Heart left ventricle (tissue), 16 donors: ENCODE measurements at regions of chr6 and their contacts with region 1.

Region 1: GRCh38 chr6:145372671-145373151 is 362.6 kb downstream of the EPM2A start:
- DNase-seq: peak in 4 of 5 donors; percentile 62 to 74 (median 72)
- ATAC-seq: peak; percentile 98 to 99 (median 98)
- H3K4me3 ChIP-seq: peak overlapping the region in 9 of 12 donors; percentile 10 to 38 (median 30)
- H3K27ac ChIP-seq: peak overlapping the region; percentile 49 to 77 (median 68)
- H3K4me1 ChIP-seq: peaks cover 0 to 21% (median 6%) of the 10 kb centered on the region in 12 donors
- H3K27me3 ChIP-seq: no peaks in the 10 kb centered on the region
- CTCF ChIP-seq: no peak
- POLR2A ChIP-seq: no peak

Region 2: DNA sequence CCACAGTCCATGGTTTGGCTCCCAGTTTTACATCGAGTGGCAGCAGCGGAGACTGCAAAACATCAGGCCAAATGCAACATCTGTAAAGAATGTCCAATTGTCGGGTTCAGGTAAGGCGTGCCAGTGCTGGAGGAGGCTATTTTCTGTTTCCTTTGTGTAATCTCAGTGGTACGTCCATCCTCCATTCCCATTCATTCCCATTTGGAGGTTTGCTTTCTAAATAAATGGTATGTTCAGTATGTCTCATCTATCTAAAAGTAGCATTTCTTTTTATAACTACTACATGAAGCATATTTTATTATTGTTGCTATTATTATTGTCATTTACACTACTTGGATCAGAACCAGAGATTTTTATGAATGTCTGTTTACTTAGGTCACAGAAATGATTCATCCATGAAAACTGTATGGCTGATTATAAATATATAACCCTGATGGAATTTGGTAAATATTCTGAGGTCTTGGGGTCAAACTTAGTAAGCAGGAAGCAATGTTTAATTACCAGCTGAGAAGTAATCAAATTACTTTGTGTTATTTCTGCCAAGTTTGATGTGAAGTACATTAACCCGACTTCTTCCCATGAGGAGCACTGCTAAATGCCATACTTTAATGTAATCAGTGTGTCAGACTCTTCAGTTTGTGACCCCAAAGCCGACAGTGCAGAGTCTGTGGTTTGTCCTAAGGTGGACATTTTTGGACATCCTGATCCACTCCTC is 574.7 kb before region 1 on chr6:
- intact Hi-C with region 1: no loop called
- DNase-seq: no peak
- ATAC-seq: no peak
- H3K4me3 ChIP-seq: no peak overlapping the region
- H3K27ac ChIP-seq: no peak overlapping the region
- H3K4me1 ChIP-seq: no peaks in the 10 kb centered on the region
- H3K27me3 ChIP-seq: no peaks in the 10 kb centered on the region
- CTCF ChIP-seq: no peak
- POLR2A ChIP-seq: no peak

Region 3: GRCh38 chr6:145547596-145548335 is 175.1 kb after region 1 on chr6:
- intact Hi-C with region 1: loop called in 1 of 10 experiments (anchors 5 kb)
- DNase-seq: peak in 2 of 5 donors; percentile 8 to 33
- ATAC-seq: peak in 3 of 4 donors; percentile 48 to 71 (median 53)
- H3K4me3 ChIP-seq: no peak overlapping the region
- H3K27ac ChIP-seq: no peak overlapping the region
- H3K4me1 ChIP-seq: peaks cover 0 to 16% (median 0%) of the 10 kb centered on the region in 12 donors
- H3K27me3 ChIP-seq: no peaks in the 10 kb centered on the region
- CTCF ChIP-seq: no peak
- POLR2A ChIP-seq: no peak

Region 4: DNA sequence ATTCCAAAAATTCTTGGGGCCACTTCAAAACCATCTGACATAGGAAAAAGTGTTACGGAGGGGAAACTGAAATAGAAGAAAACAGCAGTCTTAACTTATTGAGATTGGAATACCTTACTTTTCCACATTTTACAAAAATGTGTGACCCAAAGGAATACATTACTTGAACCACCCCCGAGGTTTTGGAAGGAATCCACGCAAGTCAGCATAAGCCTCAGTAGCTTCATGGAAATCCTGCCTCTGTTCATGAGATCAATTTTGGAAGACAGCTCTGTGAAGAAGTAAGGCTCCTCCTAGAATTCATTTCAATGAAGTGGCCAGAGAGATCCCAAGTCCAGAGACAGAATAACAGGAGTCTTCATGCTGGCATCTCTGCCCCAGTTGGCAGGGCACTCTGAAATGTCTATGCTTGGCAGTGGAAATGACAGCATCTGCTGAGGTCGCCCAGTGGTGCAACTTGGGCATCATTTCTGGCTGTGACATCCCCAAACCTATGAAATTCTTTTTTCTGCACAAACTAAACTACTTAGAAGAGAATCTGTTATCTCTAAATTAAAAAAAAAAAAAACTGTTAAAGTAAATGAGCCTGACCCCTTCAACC is 230.1 kb after region 1 on chr6:
- intact Hi-C with region 1: loop called in 1 of 10 experiments (anchors 10 kb)
- DNase-seq: peak in 2 of 5 donors; percentile 36 to 40
- ATAC-seq: peak in 2 of 4 donors; percentile 38 to 71
- H3K4me3 ChIP-seq: no peak overlapping the region
- H3K27ac ChIP-seq: no peak overlapping the region
- H3K4me1 ChIP-seq: no peaks in the 10 kb centered on the region
- H3K27me3 ChIP-seq: no peaks in the 10 kb centered on the region
- CTCF ChIP-seq: no peak
- POLR2A ChIP-seq: no peak